ENCODE measurements at regions of chr20 and their contacts with region 1.

Region 1: DNA sequence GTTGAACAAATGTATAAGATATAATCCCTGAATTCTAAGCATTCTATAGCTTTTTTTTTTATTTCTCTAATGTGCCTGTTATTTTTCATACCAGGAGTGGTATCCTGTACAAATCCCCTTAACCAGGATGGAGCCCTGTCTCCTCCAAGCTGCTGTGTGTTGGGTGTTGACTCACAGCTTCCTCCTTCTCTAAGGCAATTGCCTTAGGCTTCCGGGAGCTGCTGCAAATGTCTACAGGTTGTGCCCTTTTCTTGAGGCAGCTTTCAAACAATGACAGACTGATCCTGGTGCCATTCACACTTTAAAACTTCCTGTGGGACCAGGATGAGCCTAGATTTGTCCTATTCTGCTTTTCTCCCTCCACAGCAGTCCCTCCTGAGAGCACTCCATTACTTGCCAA is 173.2 kb downstream of the BTBD3 start:
- DNase-seq: peak; percentile 54
- H3K4me3 ChIP-seq: no peak overlapping the region
- H3K27ac ChIP-seq: no peak overlapping the region
- H3K4me1 ChIP-seq: peaks cover 11% of the 10 kb centered on the region
- H3K27me3 ChIP-seq: no peaks in the 10 kb centered on the region
- CTCF ChIP-seq: no peak
- POLR2A ChIP-seq: no peak

Region 2: DNA sequence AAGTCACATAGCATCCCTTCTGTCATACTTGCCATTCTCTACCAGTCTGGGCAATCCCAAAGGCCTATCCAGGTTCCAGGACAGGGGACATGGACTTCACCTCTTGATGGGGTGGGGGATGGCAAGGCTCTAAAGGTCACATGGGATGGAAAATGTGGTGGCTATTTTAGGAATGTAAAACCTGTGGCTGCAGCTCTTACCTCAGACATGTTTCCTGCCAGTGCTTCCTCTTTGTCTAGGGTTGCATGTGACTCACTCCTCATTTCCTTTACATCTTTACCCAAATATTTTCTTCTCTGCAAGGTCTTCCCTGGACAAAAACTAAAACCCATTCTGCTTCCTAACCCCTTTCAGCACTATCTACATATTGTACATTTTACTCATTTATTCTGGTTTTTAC is 37.6 kb before region 1 on chr20:
- CTCF ChIA-PET with region 1: no interaction called
- POLR2A ChIA-PET with region 1: no interaction called
- dilution Hi-C with region 1: no loop called
- intact Hi-C with region 1: loop called (anchors 1 kb)
- DNase-seq: peak; percentile 90
- H3K4me3 ChIP-seq: no peak overlapping the region
- H3K27ac ChIP-seq: peak overlapping the region; percentile 90
- H3K4me1 ChIP-seq: peaks cover 34% of the 10 kb centered on the region
- H3K27me3 ChIP-seq: no peaks in the 10 kb centered on the region
- CTCF ChIP-seq: no peak
- POLR2A ChIP-seq: no peak

Region 3: GRCh38 chr20:12130781-12131180 is 39.9 kb after region 1 on chr20:
- CTCF ChIA-PET with region 1: no interaction called
- POLR2A ChIA-PET with region 1: no interaction called
- dilution Hi-C with region 1: no loop called
- intact Hi-C with region 1: no loop called
- DNase-seq: no peak
- H3K4me3 ChIP-seq: no peak overlapping the region
- H3K27ac ChIP-seq: no peak overlapping the region
- H3K4me1 ChIP-seq: no peaks in the 10 kb centered on the region
- H3K27me3 ChIP-seq: no peaks in the 10 kb centered on the region
- CTCF ChIP-seq: no peak
- POLR2A ChIP-seq: no peak

Region 4: DNA sequence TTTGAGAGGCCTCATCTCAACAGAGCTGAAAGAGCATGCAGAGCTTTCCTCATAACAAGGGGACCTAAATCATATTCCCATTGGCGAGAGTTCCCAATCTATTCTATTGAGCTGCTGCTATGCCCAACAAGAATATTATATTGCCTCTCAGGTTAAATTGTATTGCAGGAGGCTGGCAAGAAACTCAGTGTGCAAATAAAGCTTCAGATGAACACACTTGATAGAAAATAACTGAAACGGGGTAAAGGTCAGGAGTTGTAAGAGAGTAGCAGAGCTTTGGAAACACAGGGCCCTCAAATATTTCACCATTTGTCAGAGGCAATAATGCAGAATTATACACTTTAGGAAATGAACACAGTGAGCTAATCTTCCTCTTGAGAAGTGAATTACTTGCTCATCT is 553.5 kb after region 1 on chr20:
- CTCF ChIA-PET with region 1: no interaction called
- POLR2A ChIA-PET with region 1: no interaction called
- dilution Hi-C with region 1: no loop called
- intact Hi-C with region 1: no loop called
- DNase-seq: no peak
- H3K4me3 ChIP-seq: no peak overlapping the region
- H3K27ac ChIP-seq: no peak overlapping the region
- H3K4me1 ChIP-seq: no peaks in the 10 kb centered on the region
- H3K27me3 ChIP-seq: no peaks in the 10 kb centered on the region
- CTCF ChIP-seq: no peak
- POLR2A ChIP-seq: no peak